Activated CD8-positive, alpha-beta T cell treated with anti-CD3 and anti-CD28 coated beads, Interleukin-2, amount 10 ng/mL, durations not matched to agents 7 days and 5 days (primary cell): ENCODE measurements at regions of chr4 and their contacts with region 1.

Region 1: GRCh38 chr4:87375719-87376291 is 15.2 kb downstream of the HSD17B11 start:
- DNase-seq: no peak
- ATAC-seq: peak; percentile 44
- H3K4me3 Mint-ChIP-seq: no peak overlapping the region
- H3K27ac Mint-ChIP-seq: peak overlapping the region; percentile 46
- H3K4me1 Mint-ChIP-seq: peaks cover 2% of the 10 kb centered on the region
- H3K27me3 Mint-ChIP-seq: no peaks in the 10 kb centered on the region

Region 2: DNA sequence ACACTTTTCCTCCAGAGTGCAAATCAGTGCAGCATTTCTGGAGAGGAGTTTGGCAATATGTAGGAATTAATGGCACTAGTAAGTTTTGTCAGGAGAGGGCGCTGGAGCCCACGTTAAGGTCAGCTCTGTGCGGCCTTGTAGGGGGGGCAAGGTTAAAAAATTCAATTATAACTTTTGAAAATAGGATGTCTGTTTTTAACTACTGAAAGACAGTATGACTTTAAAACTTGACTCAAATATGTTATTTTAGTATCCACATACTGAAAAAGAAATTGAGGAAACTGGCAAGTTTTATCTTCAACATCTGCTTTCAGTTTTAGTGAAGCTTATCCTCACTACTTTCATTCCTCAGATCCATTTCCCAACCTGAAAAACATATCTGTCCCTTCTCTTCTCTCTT is 22.2 kb before region 1 on chr4:
- CTCF ChIA-PET with region 1: interaction called, 14 read pairs
- POLR2A ChIA-PET with region 1: no interaction called
- DNase-seq: peak; percentile 54
- ATAC-seq: no peak
- H3K4me3 Mint-ChIP-seq: no peak overlapping the region
- H3K27ac Mint-ChIP-seq: no peak overlapping the region
- H3K4me1 Mint-ChIP-seq: no peaks in the 10 kb centered on the region
- H3K27me3 Mint-ChIP-seq: no peaks in the 10 kb centered on the region

Region 3: DNA sequence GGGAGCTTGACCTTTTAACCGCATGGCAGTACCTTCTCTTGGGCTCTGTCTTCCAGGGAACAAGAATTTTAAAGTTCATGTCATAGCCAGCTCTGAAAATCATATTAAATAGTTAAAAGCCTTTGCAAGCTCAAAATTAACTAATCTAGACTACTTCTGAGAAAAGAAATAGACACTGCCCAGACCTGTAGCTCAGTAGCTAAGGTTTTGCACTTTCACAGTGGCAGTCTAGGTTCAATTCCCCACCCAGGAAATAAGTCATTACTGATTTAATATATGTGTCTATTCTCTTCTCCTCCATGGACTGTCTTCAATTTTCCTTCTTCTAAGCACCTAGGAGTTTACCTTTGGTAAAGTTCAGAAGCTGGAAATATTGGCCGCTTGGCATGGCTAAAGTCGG is 12.2 kb before region 1 on chr4:
- CTCF ChIA-PET with region 1: interaction called, 15 read pairs
- POLR2A ChIA-PET with region 1: no interaction called
- DNase-seq: no peak
- ATAC-seq: no peak
- H3K4me3 Mint-ChIP-seq: no peak overlapping the region
- H3K27ac Mint-ChIP-seq: no peak overlapping the region
- H3K4me1 Mint-ChIP-seq: no peaks in the 10 kb centered on the region
- H3K27me3 Mint-ChIP-seq: no peaks in the 10 kb centered on the region

Region 4: DNA sequence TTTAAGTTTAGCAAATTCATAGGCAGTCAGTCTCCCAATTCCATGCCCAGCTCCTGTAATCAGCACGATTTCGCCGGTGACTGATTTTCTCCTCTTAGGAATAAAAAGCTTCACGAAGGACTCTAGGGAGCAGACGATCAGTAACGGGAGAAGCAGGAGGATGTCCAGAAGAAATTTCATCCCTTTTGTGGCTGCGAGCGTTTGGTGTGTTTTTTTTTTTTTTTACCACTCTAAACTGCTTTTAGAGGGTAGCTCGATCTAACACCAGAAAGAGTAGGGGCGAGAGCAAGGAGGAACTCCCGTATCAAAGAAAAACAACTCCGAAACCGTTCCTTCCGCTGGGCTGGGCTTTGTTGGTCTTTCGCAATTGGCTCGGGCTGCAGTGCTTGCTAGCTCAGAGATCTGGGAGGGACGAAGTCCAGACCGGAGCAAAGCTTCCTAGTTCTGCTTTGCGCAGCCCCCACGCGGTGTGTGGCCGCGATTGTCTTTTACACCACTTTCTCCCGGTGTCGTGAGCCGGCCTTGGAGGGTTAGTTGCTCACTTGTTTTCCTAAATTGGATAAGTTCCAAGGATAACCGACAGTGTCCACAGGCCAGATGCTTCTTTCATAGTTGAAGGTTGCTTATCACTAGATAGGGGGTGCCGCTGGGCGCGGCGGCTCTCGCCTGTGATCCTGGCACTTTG is 15.2 kb after region 1 on chr4 and contains the start of gene HSD17B11:
- CTCF ChIA-PET with region 1: interaction called, 49 read pairs
- POLR2A ChIA-PET with region 1: interaction called, 5 read pairs
- DNase-seq: peak; percentile 91
- ATAC-seq: peak; percentile 99
- H3K4me3 Mint-ChIP-seq: peak within 1 kb of the TSS; percentile 88
- H3K27ac Mint-ChIP-seq: peak within 1 kb of the TSS; percentile 88
- H3K4me1 Mint-ChIP-seq: peaks cover 48% of the 10 kb centered on the region
- H3K27me3 Mint-ChIP-seq: no peaks in the 10 kb centered on the region
- total RNA-seq, gene HSD17B11: 30.2 to 32.2 TPM

Region 5: GRCh38 chr4:87422104-87423052 is 46.6 kb after region 1 on chr4 and contains the start of gene NUDT9:
- CTCF ChIA-PET with region 1: interaction called, 22 read pairs
- POLR2A ChIA-PET with region 1: interaction called, 3 read pairs
- DNase-seq: peak; percentile 91
- ATAC-seq: peak; percentile 90
- H3K4me3 Mint-ChIP-seq: peak within 1 kb of the TSS; percentile 96
- H3K27ac Mint-ChIP-seq: peak within 1 kb of the TSS; percentile 96
- H3K4me1 Mint-ChIP-seq: peaks cover 27% of the 10 kb centered on the region
- H3K27me3 Mint-ChIP-seq: no peaks in the 10 kb centered on the region
- total RNA-seq, gene NUDT9: 10.9 to 11.0 TPM

Region 6: GRCh38 chr4:87458913-87459312 is 83.1 kb after region 1 on chr4:
- CTCF ChIA-PET with region 1: interaction called, 100 read pairs
- POLR2A ChIA-PET with region 1: no interaction called
- DNase-seq: no peak
- ATAC-seq: no peak
- H3K4me3 Mint-ChIP-seq: no peak overlapping the region
- H3K27ac Mint-ChIP-seq: no peak overlapping the region
- H3K4me1 Mint-ChIP-seq: no peaks in the 10 kb centered on the region
- H3K27me3 Mint-ChIP-seq: no peaks in the 10 kb centered on the region

Region 7: GRCh38 chr4:87465739-87466366 is 90.0 kb after region 1 on chr4:
- CTCF ChIA-PET with region 1: interaction called, 100 read pairs
- POLR2A ChIA-PET with region 1: no interaction called
- DNase-seq: peak; percentile 27
- ATAC-seq: no peak
- H3K4me3 Mint-ChIP-seq: no peak overlapping the region
- H3K27ac Mint-ChIP-seq: no peak overlapping the region
- H3K4me1 Mint-ChIP-seq: no peaks in the 10 kb centered on the region
- H3K27me3 Mint-ChIP-seq: no peaks in the 10 kb centered on the region

Region 8: DNA sequence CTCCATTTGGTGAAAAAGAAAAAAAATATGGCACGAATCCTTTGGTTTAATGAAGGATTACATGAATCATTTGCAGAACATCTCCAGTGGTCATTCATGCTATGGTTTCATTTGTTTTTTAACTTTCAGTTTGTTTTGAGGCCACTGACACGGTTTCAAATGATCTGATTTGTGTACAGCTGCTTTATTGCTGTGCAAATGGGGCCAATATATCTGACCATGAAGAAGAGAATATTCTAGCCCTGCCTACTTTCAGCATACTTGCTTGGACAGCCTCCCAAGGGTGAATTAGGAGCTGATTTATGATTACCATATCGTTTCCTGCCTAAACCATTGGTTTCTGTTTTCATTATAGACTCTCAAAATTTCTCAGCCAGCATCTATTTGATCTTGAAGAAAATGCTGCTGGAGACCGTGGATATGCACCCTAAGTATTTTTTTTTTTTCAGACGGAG is 122.7 kb after region 1 on chr4:
- CTCF ChIA-PET with region 1: no interaction called
- POLR2A ChIA-PET with region 1: no interaction called
- DNase-seq: no peak
- ATAC-seq: no peak
- H3K4me3 Mint-ChIP-seq: no peak overlapping the region
- H3K27ac Mint-ChIP-seq: no peak overlapping the region
- H3K4me1 Mint-ChIP-seq: peaks cover 6% of the 10 kb centered on the region
- H3K27me3 Mint-ChIP-seq: no peaks in the 10 kb centered on the region